ENCODE measurements at regions of chr1 and their contacts with region 1.

Region 1: GRCh38 chr1:40416709-40417108 is 33.6 kb upstream of the ZFP69B start:
- DNase-seq: no peak
- ATAC-seq: no peak
- H3K4me3 Mint-ChIP-seq: no peak overlapping the region
- H3K27ac Mint-ChIP-seq: no peak overlapping the region
- H3K4me1 Mint-ChIP-seq: peaks cover 33% of the 10 kb centered on the region
- H3K27me3 Mint-ChIP-seq: no peaks in the 10 kb centered on the region

Region 2: DNA sequence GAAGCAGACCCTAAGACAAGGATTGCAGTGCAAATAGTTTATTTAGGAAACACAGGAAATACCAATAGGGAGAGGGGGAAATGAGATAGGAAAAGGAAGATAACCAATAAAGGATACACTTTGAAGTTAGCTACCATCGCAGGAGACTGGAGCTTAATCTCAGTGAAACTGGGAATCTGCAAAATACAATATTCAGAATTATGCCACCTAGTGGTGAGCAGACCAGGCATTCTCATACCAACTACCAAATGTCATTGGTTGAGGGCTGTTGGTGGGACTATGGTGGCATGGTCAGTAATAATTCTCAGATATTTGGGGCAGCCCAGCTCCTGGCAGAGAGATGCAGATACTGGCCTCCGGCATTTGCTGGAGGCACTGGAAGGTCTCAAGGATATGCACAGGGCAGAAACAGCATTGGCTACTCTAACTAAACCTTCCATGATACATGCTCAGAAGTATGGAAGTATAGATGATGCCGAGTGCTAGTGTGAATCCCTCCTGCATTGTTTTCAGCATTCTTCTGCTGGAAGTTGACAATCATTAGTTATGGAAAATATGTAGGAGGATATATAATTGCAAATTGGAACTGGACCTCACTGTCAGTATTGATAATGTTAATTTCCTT is 21.8 kb after region 1 on chr1:
- CTCF ChIA-PET with region 1: interaction called, 11 read pairs
- POLR2A ChIA-PET with region 1: interaction called, 3 read pairs
- DNase-seq: peak; percentile 27
- ATAC-seq: peak; percentile 47
- H3K4me3 Mint-ChIP-seq: no peak overlapping the region
- H3K27ac Mint-ChIP-seq: no peak overlapping the region
- H3K4me1 Mint-ChIP-seq: no peaks in the 10 kb centered on the region
- H3K27me3 Mint-ChIP-seq: no peaks in the 10 kb centered on the region

Measured in activated CD8-positive, alpha-beta T cell treated with anti-CD3 and anti-CD28 coated beads, Interleukin-2, amount 10 ng/mL, durations not matched to agents 7 days and 5 days (primary cell).